ENCODE measurements at regions of chr10 and their contacts with region 1.

Region 1: GRCh38 chr10:110225756-110226542 is 18.5 kb downstream of the MXI1 start:
- DNase-seq: peak; percentile 90
- ATAC-seq: peak; percentile 72
- H3K4me3 Mint-ChIP-seq: peak overlapping the region; percentile 92
- H3K27ac Mint-ChIP-seq: peak overlapping the region; percentile 92
- H3K4me1 Mint-ChIP-seq: peaks cover 40% of the 10 kb centered on the region
- H3K27me3 Mint-ChIP-seq: peaks cover 7% of the 10 kb centered on the region

Region 2: DNA sequence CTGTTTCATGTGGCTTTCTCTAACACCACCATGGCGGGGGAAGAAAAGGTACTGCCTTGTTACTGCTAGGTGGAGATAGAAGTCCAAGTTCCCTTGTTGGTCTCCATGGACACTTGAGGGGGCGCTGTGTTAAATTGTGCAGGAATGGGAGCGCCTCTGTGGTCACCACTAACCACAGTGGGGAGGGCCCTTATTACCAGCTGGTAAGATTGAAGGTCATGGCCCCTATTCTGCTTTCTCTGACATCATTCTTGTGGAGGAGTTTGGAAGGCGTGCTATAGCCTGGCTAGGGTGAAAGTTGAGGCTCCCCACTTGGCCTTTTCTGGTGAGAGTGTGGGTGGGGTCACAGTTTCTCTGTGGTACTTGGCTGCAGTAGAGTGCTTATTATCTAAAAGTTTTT is 33.4 kb before region 1 on chr10:
- CTCF ChIA-PET with region 1: no interaction called
- POLR2A ChIA-PET with region 1: no interaction called
- DNase-seq: no peak
- ATAC-seq: no peak
- H3K4me3 Mint-ChIP-seq: no peak overlapping the region
- H3K27ac Mint-ChIP-seq: no peak overlapping the region
- H3K4me1 Mint-ChIP-seq: no peaks in the 10 kb centered on the region
- H3K27me3 Mint-ChIP-seq: peaks cover 49% of the 10 kb centered on the region

Region 3: GRCh38 chr10:110210674-110211464 is 15.1 kb before region 1 on chr10:
- CTCF ChIA-PET with region 1: interaction called, 63 read pairs
- POLR2A ChIA-PET with region 1: interaction called, 29 read pairs
- DNase-seq: peak; percentile 94
- ATAC-seq: peak; percentile 68
- H3K4me3 Mint-ChIP-seq: peak overlapping the region; percentile 90
- H3K27ac Mint-ChIP-seq: peak overlapping the region; percentile 84
- H3K4me1 Mint-ChIP-seq: peaks cover 56% of the 10 kb centered on the region
- H3K27me3 Mint-ChIP-seq: peaks cover 15% of the 10 kb centered on the region